Posterior vena cava (tissue), 2 donors: ENCODE measurements at regions of chr1 and their contacts with region 1.

Region 1: DNA sequence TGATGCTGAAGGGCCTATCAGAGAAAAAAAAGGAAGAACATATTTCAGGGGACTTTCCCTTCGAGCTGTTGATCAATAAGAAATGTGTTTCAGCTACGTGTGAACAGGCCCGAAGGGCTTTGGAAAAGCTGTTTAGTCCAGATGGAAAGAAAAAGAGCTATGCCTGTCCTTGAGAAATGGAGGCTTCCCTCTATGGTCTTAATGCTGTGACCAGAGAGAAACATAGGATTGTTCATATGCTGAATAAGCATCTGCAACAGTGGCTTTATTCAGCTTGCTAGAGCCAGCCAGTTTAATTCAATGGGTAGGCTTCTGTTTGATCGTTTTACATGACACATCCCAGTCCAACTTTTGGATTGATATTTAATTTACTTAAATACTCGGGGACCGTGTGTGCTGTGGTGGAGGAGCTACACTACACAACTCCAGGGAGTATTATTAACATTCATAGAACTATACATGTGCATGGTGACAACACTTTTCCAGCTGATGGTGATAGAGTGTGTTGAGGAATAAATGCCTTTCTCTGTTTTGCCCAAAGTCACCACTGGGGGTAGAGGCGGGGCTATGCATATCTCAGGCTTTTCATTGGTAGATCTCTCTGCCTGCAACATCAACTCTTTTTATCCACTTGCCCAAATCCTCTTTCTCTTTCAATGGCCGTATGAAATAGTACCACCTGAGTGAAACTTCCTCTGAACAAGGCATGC is 106.7 kb upstream of the C8B start:
- DNase-seq: no peak

Region 2: GRCh38 chr1:56908619-56909221 is 163.8 kb before region 1 on chr1:
- intact Hi-C with region 1: no loop called
- DNase-seq: no peak

Region 3: DNA sequence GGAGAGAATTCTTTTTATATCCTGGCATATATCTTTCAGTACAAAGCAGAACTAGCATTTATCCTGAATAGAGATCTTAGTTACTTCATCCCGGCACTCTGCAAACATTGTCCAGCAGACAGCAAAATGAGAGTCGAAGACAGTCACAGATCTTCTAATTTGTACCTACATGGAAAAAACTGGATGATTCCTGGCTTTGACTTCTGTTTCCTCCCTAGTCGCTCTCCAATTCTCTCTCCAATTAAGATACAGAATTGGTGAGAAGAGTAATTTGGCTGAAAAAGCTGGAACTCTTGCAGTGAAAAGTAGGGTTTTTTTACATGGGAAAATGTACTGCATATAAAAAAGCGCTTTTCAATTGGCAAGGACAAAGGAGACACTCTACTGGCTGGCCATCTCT is 44.3 kb after region 1 on chr1:
- intact Hi-C with region 1: loop called (anchors 1 to 10 kb)
- DNase-seq: no peak

Region 4: DNA sequence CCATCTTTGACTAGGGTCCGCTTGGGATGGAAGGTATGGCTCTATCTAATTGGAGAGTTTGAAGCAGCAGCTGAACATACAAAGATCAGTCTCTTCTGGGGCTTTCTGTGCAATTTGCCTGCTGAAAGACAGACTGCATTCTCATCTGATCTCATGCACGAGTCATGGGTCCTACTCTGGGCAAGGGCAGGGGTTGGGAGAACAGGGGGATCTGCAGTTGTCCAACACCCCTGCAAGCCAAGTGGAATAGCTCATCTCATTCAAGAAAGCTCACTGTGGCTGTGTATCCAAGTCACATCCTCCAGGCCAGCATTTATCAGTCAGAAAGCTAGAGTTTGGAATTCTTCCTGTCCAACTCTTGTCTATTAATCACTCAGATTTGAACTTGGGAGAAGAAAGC is 70.4 kb after region 1 on chr1:
- intact Hi-C with region 1: no loop called
- DNase-seq: no peak

Region 5: GRCh38 chr1:57206038-57206437 is 133.5 kb after region 1 on chr1:
- intact Hi-C with region 1: no loop called
- DNase-seq: no peak

Region 6: GRCh38 chr1:58841455-58841854 is 1768.9 kb after region 1 on chr1:
- intact Hi-C with region 1: no loop called
- DNase-seq: no peak